AG04449 (cell line): ENCODE measurements at regions of chr2 and their contacts with region 1.

Region 1: GRCh38 chr2:238720232-238720672 is 127.6 kb upstream of the TWIST2 start:
- DNase-seq: no peak
- H3K4me3 ChIP-seq: no peak overlapping the region
- CTCF ChIP-seq: peak; percentile 68

Region 2: GRCh38 chr2:238706673-238707072 is 13.6 kb before region 1 on chr2:
- CTCF ChIA-PET with region 1: interaction called, 10 read pairs
- POLR2A ChIA-PET with region 1: no interaction called
- DNase-seq: no peak
- H3K4me3 ChIP-seq: no peak overlapping the region
- CTCF ChIP-seq: peak; percentile 12

Region 3: DNA sequence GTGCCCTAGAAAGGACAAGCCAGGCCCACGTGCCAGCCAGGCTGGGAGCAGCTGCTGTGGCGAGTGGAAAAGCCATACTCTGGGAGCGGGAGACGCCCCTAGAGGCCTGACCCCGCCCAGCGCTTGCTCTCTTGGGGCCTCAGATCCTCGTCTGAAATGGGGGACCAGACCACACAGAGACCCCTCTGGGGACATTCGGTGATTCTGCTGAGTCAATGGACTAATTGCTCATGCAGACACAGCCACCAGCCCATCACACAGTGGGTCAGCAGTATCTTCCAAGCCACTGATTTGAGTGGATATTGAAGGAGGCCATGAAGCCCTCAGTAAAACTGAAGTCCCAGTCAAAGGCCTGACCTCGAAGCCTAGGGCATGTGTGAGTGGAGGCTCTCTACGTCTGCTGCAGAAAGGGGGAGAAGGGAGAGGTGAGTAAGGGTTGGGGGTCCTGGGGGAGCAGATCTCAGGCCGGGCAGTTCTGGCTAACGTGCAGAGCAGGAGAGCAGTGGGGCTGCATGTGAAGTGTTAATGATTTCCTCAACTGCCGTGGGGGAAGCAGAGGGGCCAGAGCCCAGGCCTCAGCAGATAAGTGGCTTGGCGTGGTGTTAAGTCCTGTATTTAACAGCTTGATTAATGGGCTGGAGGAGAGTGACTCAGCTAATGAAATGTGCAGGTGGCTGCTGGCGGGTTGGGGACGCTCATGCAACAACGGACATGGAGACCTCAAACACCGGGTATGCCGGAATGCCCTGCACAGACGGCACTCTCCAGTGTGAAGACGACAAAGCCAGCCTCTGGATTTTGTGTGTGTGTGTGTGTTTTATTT is 23.2 kb after region 1 on chr2:
- CTCF ChIA-PET with region 1: no interaction called
- POLR2A ChIA-PET with region 1: no interaction called
- DNase-seq: no peak
- H3K4me3 ChIP-seq: no peak overlapping the region
- CTCF ChIP-seq: no peak

Region 4: GRCh38 chr2:238895891-238896600 is 175.8 kb after region 1 on chr2:
- CTCF ChIA-PET with region 1: no interaction called
- POLR2A ChIA-PET with region 1: no interaction called
- DNase-seq: peak; percentile 62
- H3K4me3 ChIP-seq: no peak overlapping the region
- CTCF ChIP-seq: no peak